Right ventricle myocardium superior (tissue), 1 donor: ENCODE measurements at regions of chr5 and their contacts with region 1.

Region 1: DNA sequence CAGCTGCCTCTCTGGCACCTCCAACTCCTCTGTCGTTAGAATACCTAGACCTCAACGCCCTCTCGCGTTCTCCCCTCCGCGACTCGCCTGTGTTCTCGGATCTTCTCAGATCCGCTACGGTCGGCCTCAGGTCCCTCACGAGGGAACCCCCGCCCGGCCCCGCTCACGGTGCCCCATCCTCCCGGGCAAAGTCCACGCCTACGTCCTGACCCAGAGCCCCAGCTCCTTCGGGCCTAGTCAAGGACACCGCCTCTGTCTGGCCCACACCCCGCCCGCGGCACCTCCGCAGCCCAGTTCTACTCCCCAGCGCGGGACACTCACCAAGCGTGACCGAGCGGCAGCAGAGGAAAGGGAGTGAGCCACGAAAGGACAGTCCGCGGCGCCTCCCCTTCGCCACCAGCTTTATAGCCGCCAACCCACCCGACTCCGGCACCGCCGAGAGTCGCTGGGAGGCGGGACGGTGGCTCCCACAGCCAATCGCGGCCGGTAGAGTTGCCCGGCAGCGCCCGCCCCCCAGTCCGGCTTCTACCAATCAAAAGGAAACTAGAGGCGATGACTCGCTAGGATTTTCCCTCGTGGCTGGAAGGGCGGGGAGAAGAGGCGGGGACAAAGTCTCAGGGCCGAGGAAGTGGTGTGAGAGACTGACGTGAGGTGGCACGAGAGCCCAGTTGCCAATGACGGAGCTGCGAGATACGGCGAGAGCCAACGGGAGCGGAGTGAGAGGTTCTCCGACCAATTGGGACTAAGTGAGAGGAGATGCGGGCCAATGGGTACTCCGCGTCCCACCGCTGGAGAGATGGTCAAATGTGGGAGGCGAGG is at the start of gene HMGCS1:
- DNase-seq: peak; percentile 99
- ATAC-seq: peak; percentile 98
- total RNA-seq, gene HMGCS1: 21.6 TPM

Region 2: DNA sequence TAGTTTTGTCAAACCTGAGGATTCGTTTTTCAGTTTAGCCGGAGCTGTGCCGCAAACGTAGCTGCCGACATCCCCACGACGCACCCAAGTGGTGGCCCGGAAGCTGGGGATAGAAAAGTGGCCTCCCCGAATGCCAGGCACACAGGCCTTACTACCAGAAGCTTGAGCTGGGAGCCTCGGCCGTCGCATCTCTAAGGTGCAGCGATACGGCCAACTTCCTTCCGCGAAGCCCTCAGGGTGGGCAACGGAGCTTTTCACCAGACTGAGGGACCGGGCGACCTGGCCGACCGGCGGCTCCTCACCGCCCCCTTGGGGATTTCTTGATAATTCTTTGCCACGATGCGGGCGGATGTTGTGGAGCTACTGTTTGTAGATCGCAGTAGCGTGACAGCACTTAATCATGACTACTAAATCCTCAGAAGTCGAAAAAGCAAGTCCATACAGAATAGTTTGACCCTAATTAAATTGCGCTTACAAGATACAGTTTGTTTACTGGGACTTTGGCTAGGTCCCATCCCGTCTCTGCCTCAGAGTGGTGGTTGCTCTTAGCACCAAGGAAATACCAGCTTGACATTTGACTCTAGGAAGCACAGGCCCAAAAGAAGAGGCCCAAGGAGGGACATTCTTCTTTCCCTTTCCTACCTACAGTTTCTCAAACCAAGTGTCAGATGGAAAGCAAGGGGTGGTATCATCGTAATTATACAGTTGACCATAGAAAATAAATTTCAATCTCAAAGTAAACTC is 171.0 kb after region 1 on chr5:
- intact Hi-C with region 1: loop called (anchors 5 kb)
- DNase-seq: peak; percentile 80
- ATAC-seq: peak; percentile 85